ENCODE measurements at regions of chr1 and their contacts with region 1.

Region 1: GRCh38 chr1:9413148-9413876 is 120.6 kb downstream of the SPSB1 start:
- DNase-seq: no peak
- H3K4me3 ChIP-seq: peak overlapping the region; percentile 18
- CTCF ChIP-seq: no peak

Region 2: GRCh38 chr1:9399510-9400424 is 13.5 kb before region 1 on chr1:
- CTCF ChIA-PET with region 1: interaction called, 6 read pairs
- POLR2A ChIA-PET with region 1: interaction called, 11 read pairs
- DNase-seq: no peak
- H3K4me3 ChIP-seq: no peak overlapping the region
- CTCF ChIP-seq: no peak

Region 3: DNA sequence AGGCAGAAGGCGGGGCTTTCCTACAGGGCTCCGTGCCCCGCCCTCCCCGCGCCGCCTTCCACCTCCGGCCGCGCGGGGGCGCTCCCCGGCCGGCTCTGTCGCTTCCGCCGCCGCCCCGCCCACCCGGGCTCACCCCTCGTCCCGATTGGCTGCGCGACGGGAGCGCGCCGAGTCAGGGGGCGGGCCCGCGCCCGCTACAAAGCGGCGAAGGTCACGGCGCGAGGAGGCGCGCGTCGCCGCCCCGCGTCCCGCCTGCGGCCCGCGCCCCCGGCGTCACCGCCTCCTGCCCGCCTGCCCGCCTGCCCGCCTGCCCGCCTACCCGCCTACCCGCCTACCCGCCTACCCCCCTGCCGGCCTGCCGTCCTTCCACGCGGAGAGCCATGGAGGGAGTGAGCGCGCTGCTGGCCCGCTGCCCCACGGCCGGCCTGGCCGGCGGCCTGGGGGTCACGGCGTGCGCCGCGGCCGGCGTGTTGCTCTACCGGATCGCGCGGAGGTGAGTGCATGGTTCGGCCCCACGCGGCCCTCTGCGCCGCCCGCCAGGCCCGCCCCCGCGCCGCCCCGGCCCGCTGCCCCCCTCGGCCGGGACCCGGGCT is 175.3 kb after region 1 on chr1 and contains the start of gene TMEM201:
- CTCF ChIA-PET with region 1: no interaction called
- POLR2A ChIA-PET with region 1: no interaction called
- DNase-seq: peak; percentile 4
- H3K4me3 ChIP-seq: peak within 1 kb of the TSS; percentile 67
- CTCF ChIP-seq: peak; percentile 64